Ascending aorta (tissue), 2 donors: ENCODE measurements at regions of chr4 and their contacts with region 1.

Region 1: DNA sequence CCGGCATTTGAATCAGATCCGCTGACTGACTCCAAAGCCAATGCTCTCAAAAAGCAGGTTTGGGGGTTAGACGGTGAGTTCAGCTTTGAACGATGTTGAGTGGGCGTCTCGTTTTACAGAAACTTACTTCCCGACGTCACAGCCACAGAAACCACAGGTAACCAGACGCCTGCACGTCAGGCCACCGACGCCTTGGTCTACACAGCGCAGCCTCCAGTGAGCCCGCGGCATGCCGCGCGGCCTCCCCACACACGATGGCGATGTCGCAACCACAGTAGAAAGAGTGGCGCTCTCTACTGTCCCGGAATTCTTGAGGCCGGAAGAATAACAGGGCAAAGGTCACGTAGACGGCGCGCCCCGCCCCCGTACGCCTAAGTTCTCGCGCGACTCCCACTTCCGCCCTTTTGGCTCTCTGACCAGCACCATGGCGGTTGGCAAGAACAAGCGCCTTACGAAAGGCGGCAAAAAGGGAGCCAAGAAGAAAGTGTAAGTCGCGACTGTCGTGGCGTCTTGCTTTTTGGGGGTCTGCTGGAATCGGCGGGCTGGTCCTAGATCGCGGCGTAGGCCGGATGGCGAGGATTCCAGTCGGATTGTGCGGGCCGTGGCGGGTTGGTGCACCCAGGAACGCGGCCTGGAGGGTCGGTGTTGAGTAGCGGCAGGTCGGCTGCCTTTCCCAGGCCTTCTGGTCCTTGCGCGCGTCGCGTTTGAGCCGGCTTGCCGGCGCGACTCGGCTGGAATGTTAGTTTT is at the start of gene RPS3A:
- DNase-seq: peak; percentile 90 to 98
- H3K4me3 ChIP-seq: peak within 1 kb of the TSS; percentile 73
- H3K27ac ChIP-seq: peak within 1 kb of the TSS; percentile 90 to 93
- H3K4me1 ChIP-seq: peaks cover 6 to 18% of the 10 kb centered on the region in 2 donors
- H3K27me3 ChIP-seq: no peaks in the 10 kb centered on the region
- CTCF ChIP-seq: peak; percentile 82 to 87 (median 84)
- total RNA-seq, gene RPS3A: 1,276 TPM

Region 2: GRCh38 chr4:151015459-151016347 is 83.7 kb before region 1 on chr4:
- intact Hi-C with region 1: loop called (anchors 5 kb)
- DNase-seq: peak; percentile 16 to 82
- H3K4me3 ChIP-seq: peak overlapping the region; percentile 93 to 97
- H3K27ac ChIP-seq: peak overlapping the region; percentile 82 to 87
- H3K4me1 ChIP-seq: peaks cover 0 to 2% of the 10 kb centered on the region in 2 donors
- H3K27me3 ChIP-seq: no peaks in the 10 kb centered on the region
- CTCF ChIP-seq: no peak

Region 3: GRCh38 chr4:151227731-151228130 is 128.3 kb after region 1 on chr4:
- intact Hi-C with region 1: loop called (anchors 5 kb)
- DNase-seq: peak; percentile 18 to 84
- H3K4me3 ChIP-seq: peak overlapping the region; percentile 44 to 56
- H3K27ac ChIP-seq: peak overlapping the region; percentile 85
- H3K4me1 ChIP-seq: peaks cover 0 to 10% of the 10 kb centered on the region in 2 donors
- H3K27me3 ChIP-seq: no peaks in the 10 kb centered on the region
- CTCF ChIP-seq: no peak

Region 4: GRCh38 chr4:151325111-151325948 is 225.9 kb after region 1 on chr4 and contains the start of gene SH3D19:
- intact Hi-C with region 1: loop called (anchors 5 kb)
- DNase-seq: peak in 1 of 2 donors; percentile 83
- H3K4me3 ChIP-seq: peak within 1 kb of the TSS; percentile 82 to 85
- H3K27ac ChIP-seq: peak within 1 kb of the TSS; percentile 92
- H3K4me1 ChIP-seq: no peaks in the 10 kb centered on the region
- H3K27me3 ChIP-seq: no peaks in the 10 kb centered on the region
- CTCF ChIP-seq: no peak
- total RNA-seq, gene SH3D19: 110 TPM

Region 5: DNA sequence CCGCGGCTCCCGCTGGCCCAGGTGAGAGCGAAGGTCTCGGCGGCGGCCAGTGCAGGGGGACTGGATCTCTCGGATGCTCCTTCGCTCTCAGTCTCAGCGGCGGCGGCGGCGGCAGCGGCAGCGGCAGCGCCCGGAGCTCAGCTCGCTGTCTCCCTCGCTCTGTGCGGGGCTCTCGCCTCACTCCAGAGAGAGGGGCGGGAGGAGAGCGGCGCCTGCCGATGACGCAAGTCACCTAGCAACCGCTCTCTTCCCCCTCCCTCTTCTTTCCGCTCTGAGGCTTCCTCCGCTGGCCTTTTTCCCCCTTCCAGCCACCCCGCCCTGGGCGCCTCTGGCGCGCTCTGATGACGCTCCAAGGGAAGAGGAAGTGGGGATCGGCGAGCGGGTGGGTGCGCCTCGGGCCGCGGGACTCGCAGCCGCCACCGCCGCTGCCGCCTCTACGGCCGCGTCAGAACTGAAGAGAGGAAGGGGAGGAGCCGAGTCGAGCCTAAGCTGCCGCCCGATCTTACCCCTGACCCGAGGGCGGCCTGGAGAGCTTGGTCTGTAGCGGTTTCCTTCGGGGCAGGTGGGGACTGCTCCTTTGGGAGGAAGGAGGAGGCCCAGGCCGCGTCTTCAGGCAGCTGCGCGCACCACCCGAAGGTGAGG is 1436.6 kb after region 1 on chr4 and contains the start of gene FBXW7:
- intact Hi-C with region 1: loop called (anchors 5 kb)
- DNase-seq: peak; percentile 97 to 100
- H3K4me3 ChIP-seq: peak within 1 kb of the TSS; percentile 58 to 97
- H3K27ac ChIP-seq: peak within 1 kb of the TSS; percentile 92 to 94
- H3K4me1 ChIP-seq: peaks cover 0 to 28% of the 10 kb centered on the region in 2 donors
- H3K27me3 ChIP-seq: no peaks in the 10 kb centered on the region
- CTCF ChIP-seq: no peak
- total RNA-seq, gene FBXW7: 128 TPM